ENCODE measurements at regions of chr22 and their contacts with region 1.

Region 1: GRCh38 chr22:37328017-37328416 is 45.7 kb downstream of the CYTH4 start:
- DNase-seq: no peak

Region 2: GRCh38 chr22:37139762-37140161 is 188.3 kb before region 1 on chr22:
- in situ Hi-C with region 1: no loop called
- DNase-seq: no peak

Region 3: GRCh38 chr22:37394341-37394740 is 66.3 kb after region 1 on chr22:
- in situ Hi-C with region 1: loop called (anchors 10 kb)
- DNase-seq: no peak

Measured in ACHN (cell line).